ENCODE measurements at regions of chr15 and their contacts with region 1.

Region 1: GRCh38 chr15:91852741-91853510 is 582 bp upstream of the SLCO3A1 start:
- DNase-seq: peak; percentile 78 to 90
- ATAC-seq: peak; percentile 85 to 90 (median 89)
- H3K4me3 ChIP-seq: peak overlapping the region; percentile 81
- H3K27ac ChIP-seq: peak overlapping the region; percentile 78
- H3K4me1 ChIP-seq: peaks cover 10% of the 10 kb centered on the region
- H3K27me3 ChIP-seq: no peaks in the 10 kb centered on the region
- CTCF ChIP-seq: peak; percentile 74

Region 2: DNA sequence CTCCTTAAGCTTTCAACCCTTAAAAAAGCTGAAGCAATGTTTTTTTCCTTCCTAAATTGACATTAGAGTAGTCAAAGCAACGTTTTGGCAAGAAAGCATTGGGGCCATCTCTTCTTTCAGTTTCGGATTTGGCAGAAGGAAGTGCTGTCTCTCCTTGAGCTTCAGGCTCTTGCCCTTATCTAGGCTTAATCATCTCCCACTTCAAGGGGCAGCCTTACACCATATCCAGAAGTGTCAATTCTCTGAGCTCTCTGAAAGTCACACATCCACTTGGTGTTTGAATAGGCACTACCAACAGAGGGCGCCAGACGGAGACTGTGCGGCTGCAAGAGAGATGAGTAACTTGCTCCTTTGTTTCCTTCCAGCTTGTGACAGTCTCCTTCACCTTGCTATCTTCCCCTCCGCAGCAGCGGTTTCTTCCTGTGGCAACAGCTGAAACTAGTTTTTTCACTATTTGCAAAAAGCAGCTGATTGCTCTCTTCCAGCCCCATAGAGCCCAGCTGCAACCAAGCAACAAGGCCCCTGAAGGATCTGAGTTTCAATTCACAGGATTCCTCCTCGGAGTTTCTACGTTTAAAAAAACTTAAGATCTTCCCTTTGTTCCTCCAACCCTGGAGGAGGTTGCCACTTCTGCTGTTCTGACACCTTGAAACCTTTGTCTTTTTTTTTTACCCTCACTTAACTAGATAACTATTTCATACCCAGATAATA is 146.4 kb before region 1 on chr15:
- intact Hi-C with region 1: loop called in 1 of 2 experiments (anchors 5 kb)
- DNase-seq: peak; percentile 74 to 76
- ATAC-seq: peak; percentile 64 to 76 (median 72)
- H3K4me3 ChIP-seq: no peak overlapping the region
- H3K27ac ChIP-seq: no peak overlapping the region
- H3K4me1 ChIP-seq: no peaks in the 10 kb centered on the region
- H3K27me3 ChIP-seq: peaks cover 0 to 3% (median 0%) of the 10 kb centered on the region in 3 donors
- CTCF ChIP-seq: peak; percentile 78

Region 3: DNA sequence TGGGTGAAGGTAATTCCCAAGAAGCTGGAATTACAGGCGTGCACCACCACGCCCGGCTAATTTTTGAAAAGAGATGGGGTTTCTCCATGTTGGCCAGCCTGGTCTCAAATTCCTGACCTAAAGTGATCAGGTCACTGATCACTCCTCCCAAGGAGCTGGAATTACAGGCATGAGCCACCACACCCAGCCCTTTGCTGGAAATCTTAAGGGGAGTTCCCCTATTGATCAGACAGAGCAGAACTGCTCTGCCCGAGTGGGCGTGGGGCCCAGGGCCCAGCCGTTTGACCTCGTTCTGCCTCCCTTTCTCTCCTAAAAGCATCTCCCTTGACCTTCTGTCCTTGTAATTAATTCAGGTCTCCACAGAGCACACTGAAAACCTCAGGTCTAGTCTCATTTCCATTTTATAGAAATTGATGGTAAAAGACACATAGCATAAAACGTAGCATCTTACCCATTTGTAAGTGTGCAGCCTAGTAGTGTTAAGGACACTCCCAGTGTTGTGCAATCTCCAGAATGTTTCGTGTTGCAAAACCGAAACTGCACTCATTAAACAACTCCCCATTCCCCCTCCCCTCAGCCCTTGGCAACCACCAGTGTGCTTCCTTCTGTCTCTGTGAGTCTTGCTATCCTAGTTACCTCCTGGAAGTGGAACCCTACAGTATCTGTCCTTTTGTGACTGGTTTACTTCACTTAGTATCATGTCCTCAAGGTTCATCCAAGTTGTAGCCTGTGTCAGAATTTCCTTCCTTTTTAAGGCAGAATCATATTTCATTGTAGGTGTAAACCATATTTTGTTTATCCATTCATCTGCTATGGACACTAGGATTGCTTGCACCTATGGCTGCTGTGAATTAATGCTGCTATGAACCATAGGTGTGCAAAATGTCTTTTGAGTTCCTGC is 90.0 kb after region 1 on chr15:
- intact Hi-C with region 1: loop called in 1 of 2 experiments (anchors 5 kb)
- DNase-seq: peak; percentile 82 to 85
- ATAC-seq: peak; percentile 70 to 90 (median 82)
- H3K4me3 ChIP-seq: peak overlapping the region; percentile 37
- H3K27ac ChIP-seq: peak overlapping the region; percentile 34
- H3K4me1 ChIP-seq: peaks cover 48% of the 10 kb centered on the region
- H3K27me3 ChIP-seq: no peaks in the 10 kb centered on the region
- CTCF ChIP-seq: no peak

Measured in psoas muscle (tissue), 8 donors.